ENCODE measurements at regions of chr12 and their contacts with region 1.

Region 1: GRCh38 chr12:85866986-85867776 is 6.9 kb upstream of the NTS start:
- DNase-seq: peak; percentile 54
- H3K4me3 ChIP-seq: no peak overlapping the region
- H3K27ac ChIP-seq: peak overlapping the region; percentile 39
- H3K4me1 ChIP-seq: peaks cover 9% of the 10 kb centered on the region
- H3K27me3 ChIP-seq: no peaks in the 10 kb centered on the region
- CTCF ChIP-seq: peak; percentile 57 to 74

Region 2: GRCh38 chr12:85468356-85469157 is 398.6 kb before region 1 on chr12:
- CTCF ChIA-PET with region 1: interaction called, 6 read pairs
- dilution Hi-C with region 1: no loop called
- in situ Hi-C with region 1: no loop called
- intact Hi-C with region 1: loop called (anchors 1 kb)
- DNase-seq: peak; percentile 70
- H3K4me3 ChIP-seq: peak overlapping the region in 2 of 3 experiments; percentile 15 to 16
- H3K27ac ChIP-seq: peak overlapping the region; percentile 31
- H3K4me1 ChIP-seq: peaks cover 43% of the 10 kb centered on the region
- H3K27me3 ChIP-seq: no peaks in the 10 kb centered on the region
- CTCF ChIP-seq: peak; percentile 81 to 84

Region 3: DNA sequence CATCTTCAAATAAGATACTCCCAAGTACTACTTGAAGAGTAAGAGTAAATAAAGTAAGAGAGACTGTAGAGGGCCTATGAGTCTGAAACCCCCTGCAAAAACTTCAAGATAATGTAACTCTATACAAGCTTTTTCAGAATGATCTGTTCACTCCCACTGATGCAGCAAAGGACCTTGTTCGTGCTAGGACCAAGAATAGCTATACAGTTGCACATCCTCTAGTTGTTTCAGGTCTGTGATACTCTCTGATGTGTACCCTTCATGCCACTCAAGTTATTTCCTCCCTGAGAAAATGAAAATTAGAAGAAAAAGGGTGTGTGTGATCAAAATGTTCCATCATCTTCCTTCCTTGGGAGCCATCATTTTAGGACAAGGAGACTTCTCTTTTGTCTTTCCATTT is 382.8 kb before region 1 on chr12:
- CTCF ChIA-PET with region 1: no interaction called
- dilution Hi-C with region 1: no loop called
- in situ Hi-C with region 1: loop called (anchors 5 to 10 kb)
- intact Hi-C with region 1: no loop called
- DNase-seq: no peak
- H3K4me3 ChIP-seq: no peak overlapping the region
- H3K27ac ChIP-seq: no peak overlapping the region
- H3K4me1 ChIP-seq: no peaks in the 10 kb centered on the region
- H3K27me3 ChIP-seq: no peaks in the 10 kb centered on the region
- CTCF ChIP-seq: no peak

Region 4: GRCh38 chr12:85575120-85576096 is 291.8 kb before region 1 on chr12:
- CTCF ChIA-PET with region 1: interaction called, 9 read pairs
- dilution Hi-C with region 1: no loop called
- in situ Hi-C with region 1: loop called (anchors 5 to 10 kb)
- intact Hi-C with region 1: loop called (anchors 1 kb)
- DNase-seq: peak; percentile 47
- H3K4me3 ChIP-seq: no peak overlapping the region
- H3K27ac ChIP-seq: no peak overlapping the region
- H3K4me1 ChIP-seq: no peaks in the 10 kb centered on the region
- H3K27me3 ChIP-seq: no peaks in the 10 kb centered on the region
- CTCF ChIP-seq: peak; percentile 81 to 86

Region 5: GRCh38 chr12:85755760-85756159 is 111.4 kb before region 1 on chr12:
- CTCF ChIA-PET with region 1: no interaction called
- dilution Hi-C with region 1: no loop called
- in situ Hi-C with region 1: no loop called
- intact Hi-C with region 1: loop called (anchors 1 kb)
- DNase-seq: peak; percentile 74
- H3K4me3 ChIP-seq: no peak overlapping the region
- H3K27ac ChIP-seq: peak overlapping the region; percentile 48
- H3K4me1 ChIP-seq: peaks cover 11% of the 10 kb centered on the region
- H3K27me3 ChIP-seq: no peaks in the 10 kb centered on the region
- CTCF ChIP-seq: peak; percentile 40 to 72

Region 6: DNA sequence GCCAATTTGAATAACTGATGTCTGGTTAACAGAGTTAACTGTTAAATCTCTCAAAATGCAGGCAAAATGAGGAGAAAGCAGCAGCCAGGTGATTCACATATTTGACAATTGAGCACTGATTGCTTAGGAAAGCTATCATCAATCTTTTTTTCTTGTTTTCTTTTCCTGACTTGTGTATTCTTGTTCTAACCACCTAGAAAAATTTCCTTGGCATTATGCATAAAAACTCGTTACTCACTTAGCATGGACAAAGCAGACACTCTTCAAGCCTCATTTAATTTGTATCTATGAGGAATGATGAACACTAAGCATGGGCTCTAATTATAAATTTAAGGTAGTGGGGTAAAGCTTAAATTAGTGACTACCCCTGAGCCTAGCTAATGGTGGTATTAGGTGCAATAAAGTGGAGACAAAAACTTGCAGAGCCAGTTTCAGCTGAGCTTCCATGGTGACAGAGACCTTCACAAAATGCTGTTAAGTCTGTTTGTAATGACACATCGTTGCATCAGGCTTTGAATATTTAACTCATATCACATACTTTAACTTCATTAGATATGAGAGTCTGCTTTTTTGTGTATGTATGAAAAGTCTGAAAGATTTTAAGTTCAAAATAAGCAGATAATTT is 83.0 kb before region 1 on chr12:
- CTCF ChIA-PET with region 1: no interaction called
- dilution Hi-C with region 1: no loop called
- in situ Hi-C with region 1: no loop called
- intact Hi-C with region 1: loop called (anchors 1 kb)
- DNase-seq: peak; percentile 68
- H3K4me3 ChIP-seq: no peak overlapping the region
- H3K27ac ChIP-seq: peak overlapping the region; percentile 25
- H3K4me1 ChIP-seq: no peaks in the 10 kb centered on the region
- H3K27me3 ChIP-seq: no peaks in the 10 kb centered on the region
- CTCF ChIP-seq: no peak

Region 7: GRCh38 chr12:85836197-85837090 is 30.7 kb before region 1 on chr12 and contains the start of gene RASSF9:
- CTCF ChIA-PET with region 1: interaction called, 6 read pairs
- dilution Hi-C with region 1: no loop called
- in situ Hi-C with region 1: no loop called
- intact Hi-C with region 1: loop called (anchors 2 kb)
- DNase-seq: peak; percentile 86
- H3K4me3 ChIP-seq: peak within 1 kb of the TSS; percentile 49 to 83 (median 69)
- H3K27ac ChIP-seq: peak within 1 kb of the TSS; percentile 93
- H3K4me1 ChIP-seq: peaks cover 17% of the 10 kb centered on the region
- H3K27me3 ChIP-seq: no peaks in the 10 kb centered on the region
- CTCF ChIP-seq: no peak
- total RNA-seq, gene RASSF9: 7.1 to 13.5 TPM

Measured in mammary epithelial cell (primary cell).